ENCODE measurements at regions of chr9 and their contacts with region 1.

Region 1: DNA sequence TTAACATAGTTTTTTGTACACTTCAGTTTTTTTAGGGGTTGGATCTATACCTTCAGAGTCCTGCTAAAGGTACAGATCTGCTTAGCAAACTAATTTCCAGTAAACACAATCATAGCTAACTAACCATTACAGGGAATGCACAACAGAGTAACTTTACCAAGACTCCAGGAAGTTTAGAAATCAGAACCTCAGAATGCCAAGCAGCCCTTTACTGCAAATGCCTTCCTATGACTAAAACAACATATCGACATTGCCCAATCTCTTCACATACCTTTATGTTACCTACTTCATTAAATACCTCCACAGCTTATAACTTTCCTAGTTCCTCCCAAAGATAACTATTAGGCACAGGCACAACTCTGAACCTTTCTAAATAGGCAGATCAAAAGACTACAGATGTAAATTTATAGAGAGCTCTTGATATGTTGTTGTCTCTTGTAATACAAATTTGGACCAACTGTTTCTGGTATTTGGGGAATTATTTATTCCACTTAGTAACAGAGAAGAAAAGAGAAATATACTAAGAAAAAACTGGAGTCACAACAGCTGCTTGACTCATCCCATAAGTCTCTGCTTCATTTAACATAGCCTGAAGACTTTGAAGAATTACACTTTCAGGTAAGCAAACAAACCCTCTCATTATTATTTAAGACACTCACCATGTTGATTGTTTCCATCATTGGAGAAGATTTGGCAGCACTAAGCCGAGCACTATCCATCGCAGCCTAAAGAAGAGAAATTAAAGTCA is 46.0 kb upstream of the OR2K2 start:
- DNase-seq: no peak
- ATAC-seq: no peak
- H3K4me3 ChIP-seq: no peak overlapping the region
- H3K27ac ChIP-seq: no peak overlapping the region
- H3K4me1 ChIP-seq: no peaks in the 10 kb centered on the region
- H3K27me3 ChIP-seq: no peaks in the 10 kb centered on the region
- CTCF ChIP-seq: no peak
- POLR2A ChIP-seq: no peak

Region 2: GRCh38 chr9:111412280-111412679 is 36.3 kb after region 1 on chr9:
- in situ Hi-C with region 1: no loop called
- intact Hi-C with region 1: loop called (anchors 5 kb)
- DNase-seq: no peak
- ATAC-seq: no peak
- H3K4me3 ChIP-seq: no peak overlapping the region
- H3K27ac ChIP-seq: no peak overlapping the region
- H3K4me1 ChIP-seq: no peaks in the 10 kb centered on the region
- H3K27me3 ChIP-seq: no peaks in the 10 kb centered on the region
- CTCF ChIP-seq: no peak
- POLR2A ChIP-seq: no peak